ENCODE measurements at regions of chr11 and their contacts with region 1.

Region 1: GRCh38 chr11:56841210-56841810 is 92.8 kb upstream of the OR9G4 start:
- DNase-seq: peak in 1 of 2 experiments; percentile 62
- H3K4me3 ChIP-seq: no peak overlapping the region
- H3K27ac ChIP-seq: no peak overlapping the region
- H3K4me1 ChIP-seq: no peaks in the 10 kb centered on the region
- H3K27me3 ChIP-seq: no peaks in the 10 kb centered on the region
- CTCF ChIP-seq: peak in 2 of 3 experiments; percentile 70 to 71; a peak in 3 of 4 replicates
- EP300 ChIP-seq: no peak
- POLR2A ChIP-seq: no peak
- RAD21 ChIP-seq: peak; percentile 91 to 93

Region 2: DNA sequence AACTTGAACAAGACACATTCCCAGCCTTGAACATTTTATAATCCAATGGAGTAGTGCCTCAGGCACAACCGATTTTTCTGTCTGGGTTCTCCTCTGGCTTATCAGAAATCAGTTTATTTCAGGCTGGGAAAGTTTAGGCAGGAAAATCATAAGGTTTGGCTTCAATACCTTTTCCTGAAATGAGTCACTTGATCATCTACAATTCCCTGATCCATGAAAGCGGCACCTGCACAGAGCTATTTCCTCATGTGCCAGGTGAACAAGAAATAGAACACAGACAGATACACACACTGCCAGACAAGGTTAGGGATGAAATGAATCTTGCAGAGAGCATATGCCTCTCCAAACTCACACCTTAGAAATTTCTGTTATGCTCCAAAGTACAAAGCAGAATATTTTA is 13.9 kb after region 1 on chr11:
- CTCF ChIA-PET with region 1: interaction called, 15 read pairs
- POLR2A ChIA-PET with region 1: interaction called, 3 read pairs
- DNase-seq: no peak
- H3K4me3 ChIP-seq: no peak overlapping the region
- H3K27ac ChIP-seq: no peak overlapping the region
- H3K4me1 ChIP-seq: no peaks in the 10 kb centered on the region
- H3K27me3 ChIP-seq: no peaks in the 10 kb centered on the region
- CTCF ChIP-seq: no peak
- EP300 ChIP-seq: no peak
- POLR2A ChIP-seq: no peak
- RAD21 ChIP-seq: no peak

Region 3: GRCh38 chr11:57237204-57237681 is 395.9 kb after region 1 on chr11 and contains the start of gene APLNR:
- CTCF ChIA-PET with region 1: interaction called, 14 read pairs
- POLR2A ChIA-PET with region 1: no interaction called
- DNase-seq: no peak
- H3K4me3 ChIP-seq: no peak within 1 kb of the TSS
- H3K27ac ChIP-seq: no peak within 1 kb of the TSS
- H3K4me1 ChIP-seq: peaks cover 0 to 4% (median 1%) of the 10 kb centered on the region in 4 experiments; a peak in 4 of 7 replicates
- H3K27me3 ChIP-seq: no peaks in the 10 kb centered on the region; a peak in 2 of 7 replicates
- CTCF ChIP-seq: no peak
- EP300 ChIP-seq: no peak
- POLR2A ChIP-seq: no peak
- RAD21 ChIP-seq: no peak
- total RNA-seq, gene APLNR: 0.13 TPM in 1 of 2 replicates, not detected in the other

Measured in H1 (cell line).